ENCODE measurements at regions of chr12 and their contacts with region 1.

Region 1: GRCh38 chr12:104986022-104986941 is at the start of gene NOPCHAP1:
- DNase-seq: peak; percentile 91
- H3K4me3 Mint-ChIP-seq: peak within 1 kb of the TSS; percentile 86
- H3K27ac Mint-ChIP-seq: peak within 1 kb of the TSS; percentile 17
- H3K4me1 Mint-ChIP-seq: peaks cover 40% of the 10 kb centered on the region
- H3K27me3 Mint-ChIP-seq: no peaks in the 10 kb centered on the region
- total RNA-seq, gene NOPCHAP1: 30.8 to 33.4 TPM

Region 2: DNA sequence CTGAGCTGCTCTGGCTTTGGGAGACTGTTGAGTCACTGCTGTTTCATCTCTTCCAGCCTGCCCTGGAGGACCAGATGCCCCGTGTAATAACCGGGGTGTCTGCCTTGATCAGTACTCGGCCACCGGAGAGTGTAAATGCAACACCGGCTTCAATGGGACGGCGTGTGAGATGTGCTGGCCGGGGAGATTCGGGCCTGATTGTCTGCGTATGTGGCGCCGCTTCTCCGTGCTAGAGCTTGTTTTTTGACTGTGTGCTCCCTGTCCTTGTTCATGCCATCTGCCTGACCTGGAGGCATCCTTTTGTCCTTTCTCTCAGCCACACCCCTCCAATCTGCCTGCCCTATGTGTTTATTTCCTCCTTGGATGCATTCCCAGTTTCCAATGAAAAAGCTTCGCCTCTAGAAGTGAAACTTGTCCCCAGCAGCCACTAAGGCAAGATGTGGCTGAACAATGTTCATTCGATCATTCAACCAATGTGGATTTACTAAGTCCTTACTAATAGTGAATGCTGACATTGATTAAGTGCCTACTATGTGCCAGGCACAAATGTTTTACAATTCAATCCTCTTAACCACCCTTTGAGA is 1243.8 kb before region 1 on chr12:
- CTCF ChIA-PET with region 1: no interaction called
- intact Hi-C with region 1: no loop called
- DNase-seq: no peak
- H3K4me3 Mint-ChIP-seq: no peak overlapping the region
- H3K27ac Mint-ChIP-seq: no peak overlapping the region
- H3K4me1 Mint-ChIP-seq: no peaks in the 10 kb centered on the region
- H3K27me3 Mint-ChIP-seq: peaks cover 6% of the 10 kb centered on the region

Region 3: GRCh38 chr12:104825408-104825807 is 160.9 kb before region 1 on chr12:
- CTCF ChIA-PET with region 1: no interaction called
- intact Hi-C with region 1: no loop called
- DNase-seq: peak; percentile 32
- H3K4me3 Mint-ChIP-seq: no peak overlapping the region
- H3K27ac Mint-ChIP-seq: no peak overlapping the region
- H3K4me1 Mint-ChIP-seq: peaks cover 6% of the 10 kb centered on the region
- H3K27me3 Mint-ChIP-seq: no peaks in the 10 kb centered on the region

Region 4: DNA sequence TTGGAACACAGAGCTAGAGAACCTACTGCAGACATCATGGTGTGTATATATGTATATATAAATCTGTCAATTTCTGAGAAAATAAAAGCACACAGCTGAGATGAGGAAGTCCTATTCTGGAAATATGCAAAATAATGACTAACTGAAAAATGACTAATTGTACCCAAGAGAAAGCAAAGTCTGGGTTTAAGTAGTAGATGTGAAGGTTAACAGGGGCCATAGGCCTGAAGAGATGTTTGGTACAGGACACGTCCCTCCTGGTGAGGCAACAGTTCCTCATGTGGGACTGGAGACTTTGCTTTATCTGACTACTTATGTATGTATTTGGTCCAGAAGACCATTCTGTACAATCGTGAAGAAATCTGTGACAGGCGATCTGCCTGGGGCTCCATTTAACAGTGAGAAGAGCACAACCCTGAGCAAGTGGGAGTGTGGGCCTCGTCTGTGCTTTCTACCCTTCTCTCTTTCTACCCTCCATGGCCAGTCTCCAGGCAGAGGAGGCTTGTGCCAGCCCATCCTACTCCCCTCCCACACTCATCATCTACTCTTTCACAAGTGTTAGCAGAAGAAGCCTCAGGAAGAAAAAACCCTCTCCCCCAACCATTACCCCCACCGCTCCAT is 95.7 kb before region 1 on chr12:
- CTCF ChIA-PET with region 1: no interaction called
- intact Hi-C with region 1: loop called (anchors 5 kb)
- DNase-seq: peak; percentile 10
- H3K4me3 Mint-ChIP-seq: no peak overlapping the region
- H3K27ac Mint-ChIP-seq: peak overlapping the region; percentile 68
- H3K4me1 Mint-ChIP-seq: peaks cover 13% of the 10 kb centered on the region
- H3K27me3 Mint-ChIP-seq: peaks cover 6% of the 10 kb centered on the region

Region 5: DNA sequence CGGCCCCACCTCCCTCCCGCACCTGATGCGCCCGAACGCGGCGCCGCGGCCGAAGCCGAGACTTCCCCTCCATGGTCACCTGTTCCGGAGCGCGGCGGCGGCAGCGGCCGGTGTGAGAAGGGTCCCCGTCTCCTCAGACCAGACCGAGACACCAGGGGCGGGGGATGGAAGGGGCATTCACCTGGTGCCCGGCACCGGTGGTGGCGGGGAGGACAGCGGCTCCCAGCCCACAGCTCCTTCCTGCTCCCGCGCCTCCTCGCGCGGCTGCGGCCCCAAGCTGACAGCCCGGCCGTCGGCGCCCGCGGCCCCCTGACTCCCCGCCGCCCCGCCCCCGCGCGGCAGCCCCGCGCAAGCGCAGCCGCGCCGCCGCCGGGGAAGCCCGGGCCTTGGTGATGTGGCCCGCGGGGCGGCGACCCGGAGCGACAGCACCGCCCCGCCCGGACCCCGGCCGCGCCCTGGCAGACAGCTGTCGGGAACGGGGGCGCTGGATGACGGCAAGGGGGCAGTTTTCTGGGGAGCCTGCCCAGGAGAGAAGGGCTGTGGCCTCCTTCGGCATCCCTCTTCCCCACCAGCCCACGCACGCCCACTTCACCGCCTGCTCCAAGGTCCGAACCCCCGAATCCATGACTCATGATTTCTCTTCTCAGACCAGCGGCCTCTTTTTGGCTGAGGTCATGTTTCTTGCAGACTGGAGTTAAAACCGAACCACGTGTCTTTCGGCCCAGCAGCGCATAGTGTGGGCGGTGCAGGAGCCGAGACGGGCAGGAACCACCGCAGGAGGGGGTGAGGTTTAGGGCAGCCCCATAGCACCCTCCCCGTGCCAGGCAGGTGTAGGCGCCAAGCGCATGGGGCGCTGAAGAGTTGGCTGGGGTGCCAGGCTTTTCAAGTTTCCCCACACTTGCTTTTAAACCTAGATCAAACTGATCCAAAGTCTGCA is 28.0 kb before region 1 on chr12 and contains the start of gene SLC41A2:
- CTCF ChIA-PET with region 1: interaction called, 3 read pairs
- intact Hi-C with region 1: loop called (anchors 1 kb)
- DNase-seq: peak; percentile 85
- H3K4me3 Mint-ChIP-seq: peak within 1 kb of the TSS; percentile 84
- H3K27ac Mint-ChIP-seq: peak within 1 kb of the TSS; percentile 72
- H3K4me1 Mint-ChIP-seq: peaks cover 19% of the 10 kb centered on the region
- H3K27me3 Mint-ChIP-seq: peaks cover 14% of the 10 kb centered on the region
- total RNA-seq, gene SLC41A2: 2.7 to 3.5 TPM

Region 6: GRCh38 chr12:105330283-105330930 is 344.1 kb after region 1 on chr12 and contains the start of gene C12orf75:
- CTCF ChIA-PET with region 1: no interaction called
- intact Hi-C with region 1: loop called (anchors 5 kb)
- DNase-seq: peak; percentile 86
- H3K4me3 Mint-ChIP-seq: peak within 1 kb of the TSS; percentile 76
- H3K27ac Mint-ChIP-seq: peak within 1 kb of the TSS; percentile 14
- H3K4me1 Mint-ChIP-seq: peaks cover 35% of the 10 kb centered on the region
- H3K27me3 Mint-ChIP-seq: no peaks in the 10 kb centered on the region
- total RNA-seq, gene C12orf75: 41.1 to 48.5 TPM

Measured in activated naive CD4-positive, alpha-beta T cell treated with anti-CD3 and anti-CD28 coated beads for 36 hours (primary cell).